ENCODE measurements at regions of chr12 and their contacts with region 1.

Region 1: GRCh38 chr12:63843721-63844390 is 644 bp upstream of the SRGAP1 start:
- DNase-seq: peak; percentile 94
- ATAC-seq: peak; percentile 92 to 94

Region 2: DNA sequence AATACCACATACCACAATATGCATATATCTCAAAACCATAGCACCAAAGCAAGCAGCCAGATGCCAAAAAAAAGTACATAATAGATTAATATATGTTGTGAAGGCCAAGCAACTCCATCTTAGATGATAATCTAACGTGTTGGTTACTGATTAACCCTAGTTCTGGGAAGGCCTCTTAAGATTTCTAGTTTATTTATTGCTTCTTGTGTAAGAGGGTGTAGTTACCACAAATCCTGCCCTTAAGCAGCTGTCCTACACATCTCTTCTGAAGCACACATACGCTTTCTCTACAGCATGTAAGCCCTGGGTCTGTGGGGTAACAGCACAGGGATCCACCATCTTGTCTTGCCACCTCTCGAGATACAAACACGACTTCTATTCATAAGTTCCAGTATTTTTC is 456.1 kb before region 1 on chr12:
- intact Hi-C with region 1: no loop called
- DNase-seq: no peak
- ATAC-seq: no peak

Region 3: DNA sequence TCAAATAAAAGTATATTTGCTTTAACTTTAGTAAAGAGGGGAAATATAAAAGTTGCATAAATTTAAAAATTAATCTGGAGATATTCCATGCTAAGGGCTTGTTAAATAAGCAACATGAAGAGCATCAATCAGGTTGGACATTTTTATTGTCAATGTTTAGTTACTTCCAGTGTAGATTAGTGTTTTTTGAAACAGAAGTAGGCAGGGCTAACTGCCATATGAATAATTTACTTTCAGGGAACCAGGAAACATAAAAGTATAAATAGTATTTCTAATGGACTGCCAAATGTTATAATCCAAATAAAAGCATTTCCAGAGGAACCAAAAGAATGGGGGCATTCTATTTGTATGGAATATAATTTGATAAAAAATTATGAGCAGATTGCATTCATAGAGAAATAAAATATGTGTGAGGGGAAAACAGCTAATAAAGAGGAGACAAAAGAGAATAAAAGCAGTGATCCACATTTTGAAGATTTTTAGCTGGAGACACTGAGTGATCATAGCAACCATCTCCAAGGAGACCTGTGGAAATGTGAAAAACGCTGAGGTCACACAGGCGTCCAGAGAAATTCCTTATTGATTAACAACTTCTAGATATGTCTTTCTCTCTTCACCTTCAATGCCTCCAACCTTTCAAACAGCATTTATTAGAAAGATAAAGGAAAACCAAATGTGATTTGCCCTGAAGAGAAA is 71.4 kb after region 1 on chr12:
- intact Hi-C with region 1: no loop called
- DNase-seq: no peak
- ATAC-seq: no peak

Region 4: GRCh38 chr12:63940310-63941005 is 96.6 kb after region 1 on chr12:
- intact Hi-C with region 1: loop called in 1 of 2 experiments (anchors 10 kb)
- DNase-seq: no peak
- ATAC-seq: peak; percentile 19 to 42

Region 5: DNA sequence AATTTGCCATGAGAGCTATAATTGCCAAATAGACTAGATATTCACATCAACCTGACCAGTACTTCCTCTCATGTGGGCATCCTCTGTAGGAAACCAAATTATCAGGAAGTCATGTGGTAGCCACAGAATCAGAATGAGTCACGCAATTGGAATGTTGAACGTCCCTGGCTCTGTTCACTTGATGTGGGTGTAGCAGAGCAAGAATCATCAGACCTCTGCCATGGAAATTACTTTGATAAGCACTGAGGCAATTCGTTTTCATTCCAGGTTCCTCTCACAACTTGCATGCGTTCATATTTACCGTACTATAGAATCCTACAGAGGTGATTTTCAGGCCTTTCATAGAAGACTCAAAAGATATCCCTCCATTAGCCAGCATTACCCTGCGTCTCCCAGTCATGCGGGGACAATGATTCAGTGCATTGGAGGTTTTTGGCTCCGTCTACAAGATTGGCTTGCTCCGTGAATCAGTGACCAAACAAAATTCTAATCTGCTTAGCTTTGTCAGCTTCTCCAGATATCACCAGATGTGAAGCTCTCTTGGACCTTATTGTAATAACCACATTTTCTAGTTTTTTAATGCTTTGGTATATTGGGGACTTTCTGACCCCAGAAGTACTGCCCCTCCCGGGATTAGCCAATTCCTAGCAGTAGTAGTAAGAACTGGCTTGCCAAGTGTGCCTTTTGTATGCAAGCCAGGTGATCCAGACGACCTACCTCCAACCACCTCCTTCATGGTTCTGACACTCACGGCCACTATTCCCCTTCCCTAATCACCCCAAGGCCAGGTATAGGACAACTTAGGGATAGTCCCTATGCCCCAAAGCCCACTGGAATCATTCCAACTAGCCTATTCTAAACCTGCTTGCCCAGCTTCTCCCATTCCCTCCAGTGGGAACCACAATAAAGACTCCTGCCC is 244.8 kb after region 1 on chr12:
- intact Hi-C with region 1: loop called (anchors 10 kb)
- DNase-seq: peak; percentile 62
- ATAC-seq: peak; percentile 96 to 97

Region 6: GRCh38 chr12:64137117-64137516 is 293.3 kb after region 1 on chr12:
- intact Hi-C with region 1: no loop called
- DNase-seq: no peak
- ATAC-seq: no peak

Region 7: DNA sequence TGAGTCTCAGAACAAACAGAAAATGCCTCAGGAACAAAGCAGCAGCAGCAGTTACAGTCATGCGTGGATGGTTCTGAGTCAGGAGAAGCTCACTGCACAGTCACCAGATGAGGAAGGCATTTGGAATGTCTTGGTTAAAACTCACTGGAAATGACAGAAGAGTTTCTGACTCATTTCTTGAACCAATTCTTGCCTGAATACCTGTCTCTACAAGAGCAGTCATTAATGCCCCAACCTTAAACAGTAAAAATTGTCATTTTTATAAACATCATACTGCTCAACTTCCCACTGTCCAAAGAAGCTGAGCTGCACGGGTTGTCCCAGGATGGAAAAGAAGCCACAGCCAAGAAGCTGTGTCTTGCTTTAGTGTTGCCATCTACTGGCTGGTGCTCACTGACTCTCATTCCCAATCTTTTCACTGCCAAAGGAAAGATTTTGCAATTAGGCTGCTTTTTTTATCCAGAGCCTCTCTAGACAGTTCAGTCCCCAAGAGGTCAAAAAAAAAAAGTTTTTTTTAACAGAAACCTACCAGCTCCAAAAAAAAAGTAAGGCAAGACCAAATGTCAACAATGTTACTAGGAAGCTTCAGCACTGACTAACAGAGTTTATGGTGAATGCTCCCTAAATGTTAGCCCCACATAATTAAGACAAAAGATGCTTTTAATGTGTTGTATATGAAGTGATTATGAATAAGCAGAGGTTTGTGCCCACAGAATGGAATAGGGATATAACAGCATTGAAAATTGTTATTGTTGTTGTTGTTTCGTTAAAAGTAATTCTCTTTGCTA is 337.8 kb after region 1 on chr12:
- intact Hi-C with region 1: loop called (anchors 2 to 5 kb)
- DNase-seq: peak; percentile 47
- ATAC-seq: peak; percentile 92 to 94